ENCODE measurements at regions of chr4 and their contacts with region 1.

Region 1: DNA sequence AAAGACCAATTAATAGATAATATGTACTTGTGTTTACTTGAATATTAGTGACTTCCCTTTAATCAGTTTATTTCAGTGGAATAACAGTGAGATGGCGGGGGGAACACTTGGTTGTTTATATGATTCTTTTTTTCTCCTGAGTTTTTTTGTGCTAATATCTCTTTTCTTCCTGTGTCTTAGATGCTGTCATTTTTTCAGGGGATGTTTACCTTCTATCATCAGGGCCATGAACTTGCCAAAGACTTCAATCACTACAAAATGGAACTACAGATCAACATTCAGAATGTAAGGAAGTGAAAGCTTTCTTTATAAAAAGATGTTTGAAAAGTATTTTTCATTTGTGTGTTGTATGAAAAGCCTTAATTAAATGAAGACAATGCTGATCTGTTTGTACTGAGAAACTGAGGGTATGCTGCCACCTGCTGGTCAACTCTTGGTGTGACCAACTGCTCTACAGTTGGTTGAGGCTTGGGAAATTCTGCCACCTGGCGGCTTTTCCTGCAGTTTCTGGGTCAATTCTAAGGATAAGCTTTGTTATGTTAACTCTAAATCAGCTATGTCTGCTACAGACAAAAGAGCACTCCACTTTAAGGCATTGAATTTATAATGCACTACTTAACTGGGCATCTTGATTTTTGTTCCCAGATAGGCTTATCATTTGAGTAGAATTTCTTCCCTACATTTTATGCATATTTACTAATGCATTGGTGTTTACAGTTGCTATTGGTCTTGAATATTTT is 134.8 kb downstream of the ARHGAP10 start:
- DNase-seq: peak; percentile 71 to 88 (median 81)
- ATAC-seq: peak; percentile 99
- H3K4me3 ChIP-seq: no peak overlapping the region
- H3K4me3 Mint-ChIP-seq: no peak overlapping the region
- H3K27ac ChIP-seq: no peak overlapping the region
- H3K27ac Mint-ChIP-seq: no peak overlapping the region
- H3K4me1 ChIP-seq: no peaks in the 10 kb centered on the region
- H3K4me1 Mint-ChIP-seq: peaks cover 0 to 10% (median 0%) of the 10 kb centered on the region in 7 donors
- H3K27me3 ChIP-seq: no peaks in the 10 kb centered on the region
- H3K27me3 Mint-ChIP-seq: no peaks in the 10 kb centered on the region

Region 2: GRCh38 chr4:146342600-146343192 is 1524.0 kb before region 1 on chr4:
- CTCF ChIA-PET with region 1: no interaction called
- POLR2A ChIA-PET with region 1: no interaction called
- intact Hi-C with region 1: loop called in 1 of 2 experiments (anchors 10 kb)
- DNase-seq: peak in 5 of 9 donors; percentile 27 to 43 (median 31)
- ATAC-seq: no peak
- H3K4me3 ChIP-seq: no peak overlapping the region
- H3K4me3 Mint-ChIP-seq: no peak overlapping the region
- H3K27ac ChIP-seq: no peak overlapping the region
- H3K27ac Mint-ChIP-seq: no peak overlapping the region
- H3K4me1 ChIP-seq: no peaks in the 10 kb centered on the region
- H3K4me1 Mint-ChIP-seq: peaks cover 0 to 12% (median 5%) of the 10 kb centered on the region in 7 donors
- H3K27me3 ChIP-seq: no peaks in the 10 kb centered on the region
- H3K27me3 Mint-ChIP-seq: no peaks in the 10 kb centered on the region

Region 3: GRCh38 chr4:147518846-147519767 is 347.6 kb before region 1 on chr4:
- CTCF ChIA-PET with region 1: interaction called, 22 read pairs
- POLR2A ChIA-PET with region 1: no interaction called
- intact Hi-C with region 1: loop called (anchors 1 kb)
- DNase-seq: peak in 7 of 9 donors; percentile 1 to 40 (median 27)
- ATAC-seq: peak; percentile 80
- H3K4me3 ChIP-seq: no peak overlapping the region
- H3K4me3 Mint-ChIP-seq: no peak overlapping the region
- H3K27ac ChIP-seq: no peak overlapping the region
- H3K27ac Mint-ChIP-seq: peak overlapping the region in 1 of 9 donors; percentile 23
- H3K4me1 ChIP-seq: no peaks in the 10 kb centered on the region
- H3K4me1 Mint-ChIP-seq: no peaks in the 10 kb centered on the region
- H3K27me3 ChIP-seq: no peaks in the 10 kb centered on the region
- H3K27me3 Mint-ChIP-seq: peaks cover 4 to 11% (median 7%) of the 10 kb centered on the region in 5 donors

Region 4: GRCh38 chr4:147617173-147617840 is 249.4 kb before region 1 on chr4 and contains the start of gene TMEM184C:
- CTCF ChIA-PET with region 1: interaction called, 5 read pairs
- POLR2A ChIA-PET with region 1: no interaction called
- intact Hi-C with region 1: loop called in 1 of 2 experiments (anchors 1 kb)
- DNase-seq: peak; percentile 97 to 99 (median 98)
- ATAC-seq: peak; percentile 97
- H3K4me3 ChIP-seq: peak within 1 kb of the TSS; percentile 89
- H3K4me3 Mint-ChIP-seq: peak within 1 kb of the TSS; percentile 86 to 98 (median 94)
- H3K27ac ChIP-seq: peak within 1 kb of the TSS; percentile 87
- H3K27ac Mint-ChIP-seq: peak within 1 kb of the TSS; percentile 92 to 99 (median 95)
- H3K4me1 ChIP-seq: peaks cover 21 to 30% of the 10 kb centered on the region in 2 donors
- H3K4me1 Mint-ChIP-seq: peaks cover 21 to 48% (median 33%) of the 10 kb centered on the region in 7 donors
- H3K27me3 ChIP-seq: no peaks in the 10 kb centered on the region
- H3K27me3 Mint-ChIP-seq: peaks cover 0 to 22% (median 4%) of the 10 kb centered on the region in 5 donors
- total RNA-seq, gene TMEM184C: 13.7 to 27.4 (median 19.0) TPM

Region 5: DNA sequence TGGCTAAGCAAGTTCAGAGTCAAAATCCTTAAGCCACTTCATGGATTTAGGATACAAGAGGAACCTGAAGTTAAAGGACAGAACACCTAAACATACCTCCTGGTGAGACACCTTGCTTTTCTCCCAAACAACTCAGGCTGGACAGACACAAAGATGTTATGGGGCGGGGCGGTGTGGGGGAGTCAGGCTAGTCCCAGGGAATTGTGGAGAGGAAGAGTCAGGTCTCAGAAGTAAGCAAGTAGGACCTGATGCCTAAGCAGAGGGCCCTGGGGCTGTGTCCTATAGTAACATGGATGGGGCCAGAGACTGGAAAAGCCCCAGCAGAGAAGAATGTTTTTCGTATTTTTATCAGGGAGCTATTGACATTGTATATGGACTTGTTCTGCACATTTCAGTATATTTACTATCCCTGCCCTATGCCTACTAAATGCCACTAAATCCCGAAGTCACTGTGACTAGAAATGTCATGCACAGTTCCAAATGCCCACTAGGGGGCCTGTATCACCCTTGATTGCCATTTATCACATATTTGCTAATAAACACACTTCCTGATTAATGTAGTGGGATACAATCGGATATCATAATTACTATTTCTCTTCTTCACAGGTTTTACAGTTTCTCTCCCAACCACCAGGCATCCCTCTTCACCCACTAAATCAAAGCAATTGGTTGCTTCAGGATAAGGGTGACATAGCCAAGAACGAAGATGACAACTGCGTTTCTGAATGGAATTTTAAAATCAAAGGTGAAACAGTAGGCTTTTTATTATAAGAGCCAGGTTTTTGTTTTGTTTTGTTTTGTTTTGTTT is 158.6 kb before region 1 on chr4:
- CTCF ChIA-PET with region 1: interaction called, 45 read pairs
- POLR2A ChIA-PET with region 1: no interaction called
- intact Hi-C with region 1: loop called (anchors 1 kb)
- DNase-seq: peak in 7 of 9 donors; percentile 26 to 52 (median 44)
- ATAC-seq: peak; percentile 80
- H3K4me3 ChIP-seq: no peak overlapping the region
- H3K4me3 Mint-ChIP-seq: no peak overlapping the region
- H3K27ac ChIP-seq: no peak overlapping the region
- H3K27ac Mint-ChIP-seq: no peak overlapping the region
- H3K4me1 ChIP-seq: no peaks in the 10 kb centered on the region
- H3K4me1 Mint-ChIP-seq: peaks cover 0 to 8% (median 0%) of the 10 kb centered on the region in 7 donors
- H3K27me3 ChIP-seq: no peaks in the 10 kb centered on the region
- H3K27me3 Mint-ChIP-seq: peaks cover 0 to 14% (median 0%) of the 10 kb centered on the region in 5 donors

Region 6: DNA sequence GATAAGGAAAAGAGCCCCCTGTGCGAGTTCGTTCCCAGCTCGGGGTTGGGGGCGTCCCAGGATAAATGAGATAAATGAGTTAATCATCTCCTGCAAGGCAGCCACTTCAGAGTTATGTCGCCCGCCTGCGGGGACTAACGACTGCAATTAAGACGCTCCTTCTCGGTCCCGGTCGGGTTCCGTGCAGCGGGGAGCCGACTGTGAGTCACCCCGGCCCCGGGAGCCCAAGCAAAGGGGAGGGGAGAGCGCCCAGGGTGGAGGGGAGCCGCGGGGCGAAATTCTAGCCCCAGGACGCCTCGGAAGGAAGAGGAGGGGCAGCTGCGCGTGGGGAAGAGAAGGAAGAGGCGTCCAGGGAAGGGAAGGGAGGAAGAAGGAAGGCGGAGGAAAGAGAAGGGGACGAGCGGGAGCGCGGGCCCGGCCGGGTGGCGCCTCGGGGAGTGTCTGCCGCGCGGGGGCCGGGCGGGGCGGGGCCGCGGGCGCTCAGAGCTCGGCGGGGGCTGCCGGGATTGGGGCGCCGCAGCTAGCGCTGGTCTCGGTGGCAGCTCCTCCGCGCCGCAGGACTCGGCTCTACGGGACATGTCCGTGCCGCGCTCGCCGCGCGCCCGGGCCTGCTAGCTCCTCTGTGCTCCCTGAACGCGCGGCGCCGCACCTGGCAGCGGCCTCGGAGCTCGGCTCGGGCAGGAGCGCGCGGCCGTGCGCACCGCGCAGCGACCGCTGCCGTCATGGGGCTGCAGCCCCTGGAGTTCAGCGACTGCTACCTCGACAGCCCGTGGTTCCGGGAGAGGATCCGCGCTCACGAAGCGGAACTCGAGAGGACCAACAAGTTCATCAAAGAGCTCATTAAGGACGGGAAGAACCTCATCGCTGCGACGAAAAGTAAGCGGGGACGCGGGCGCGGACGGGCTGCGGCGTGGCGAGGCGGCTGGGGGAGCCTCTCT is 134.9 kb before region 1 on chr4 and contains the start of gene ARHGAP10:
- CTCF ChIA-PET with region 1: interaction called, 16 read pairs
- POLR2A ChIA-PET with region 1: no interaction called
- intact Hi-C with region 1: loop called (anchors 1 kb)
- DNase-seq: peak; percentile 34 to 74 (median 54)
- ATAC-seq: peak; percentile 79
- H3K4me3 ChIP-seq: peak within 1 kb of the TSS; percentile 76
- H3K4me3 Mint-ChIP-seq: peak within 1 kb of the TSS; percentile 89 to 97 (median 92)
- H3K27ac ChIP-seq: peak within 1 kb of the TSS; percentile 63
- H3K27ac Mint-ChIP-seq: peak within 1 kb of the TSS; percentile 75 to 93 (median 88)
- H3K4me1 ChIP-seq: peaks cover 14 to 15% of the 10 kb centered on the region in 2 donors
- H3K4me1 Mint-ChIP-seq: peaks cover 13 to 42% (median 24%) of the 10 kb centered on the region in 7 donors
- H3K27me3 ChIP-seq: no peaks in the 10 kb centered on the region
- H3K27me3 Mint-ChIP-seq: peaks cover 0 to 41% (median 0%) of the 10 kb centered on the region in 5 donors
- total RNA-seq, gene ARHGAP10: 2.9 to 8.5 (median 3.2) TPM

Region 7: DNA sequence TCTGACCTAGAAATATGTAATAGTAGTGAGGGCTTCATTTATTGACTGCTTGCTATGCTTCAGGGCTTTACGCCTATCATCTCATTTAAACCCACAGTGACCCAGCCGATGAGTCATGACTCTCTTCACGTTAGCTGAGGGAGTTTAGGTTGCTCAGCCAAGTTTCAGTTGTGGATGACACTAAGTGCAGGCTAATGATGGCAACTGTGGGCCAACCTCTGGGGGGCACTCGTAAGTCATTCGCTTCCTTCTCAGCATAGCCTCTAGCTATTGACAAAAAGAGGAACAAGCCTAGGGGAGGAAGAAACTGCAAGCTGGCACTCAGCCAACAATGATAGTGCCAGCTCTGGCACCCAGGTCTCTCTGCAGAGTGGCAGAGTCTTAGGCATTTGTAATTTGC is 190.2 kb after region 1 on chr4:
- CTCF ChIA-PET with region 1: no interaction called
- POLR2A ChIA-PET with region 1: no interaction called
- intact Hi-C with region 1: loop called in 1 of 2 experiments (anchors 5 kb)
- DNase-seq: peak in 6 of 9 donors; percentile 22 to 40 (median 28)
- ATAC-seq: peak; percentile 80
- H3K4me3 ChIP-seq: no peak overlapping the region
- H3K4me3 Mint-ChIP-seq: peak overlapping the region in 9 of 10 donors; percentile 10 to 64 (median 29)
- H3K27ac ChIP-seq: no peak overlapping the region
- H3K27ac Mint-ChIP-seq: peak overlapping the region; percentile 48 to 99 (median 84)
- H3K4me1 ChIP-seq: peaks cover 58 to 64% of the 10 kb centered on the region in 2 donors
- H3K4me1 Mint-ChIP-seq: peaks cover 59 to 98% (median 94%) of the 10 kb centered on the region in 7 donors
- H3K27me3 ChIP-seq: no peaks in the 10 kb centered on the region
- H3K27me3 Mint-ChIP-seq: no peaks in the 10 kb centered on the region

Region 8: GRCh38 chr4:148076964-148077363 is 210.3 kb after region 1 on chr4:
- CTCF ChIA-PET with region 1: no interaction called
- POLR2A ChIA-PET with region 1: no interaction called
- intact Hi-C with region 1: no loop called
- DNase-seq: no peak
- ATAC-seq: no peak
- H3K4me3 ChIP-seq: no peak overlapping the region
- H3K4me3 Mint-ChIP-seq: no peak overlapping the region
- H3K27ac ChIP-seq: no peak overlapping the region
- H3K27ac Mint-ChIP-seq: peak overlapping the region in 1 of 9 donors; percentile 46
- H3K4me1 ChIP-seq: no peaks in the 10 kb centered on the region
- H3K4me1 Mint-ChIP-seq: no peaks in the 10 kb centered on the region
- H3K27me3 ChIP-seq: no peaks in the 10 kb centered on the region
- H3K27me3 Mint-ChIP-seq: no peaks in the 10 kb centered on the region